Heart right ventricle (tissue), 16 donors: ENCODE measurements at regions of chr12 and their contacts with region 1.

Region 1: DNA sequence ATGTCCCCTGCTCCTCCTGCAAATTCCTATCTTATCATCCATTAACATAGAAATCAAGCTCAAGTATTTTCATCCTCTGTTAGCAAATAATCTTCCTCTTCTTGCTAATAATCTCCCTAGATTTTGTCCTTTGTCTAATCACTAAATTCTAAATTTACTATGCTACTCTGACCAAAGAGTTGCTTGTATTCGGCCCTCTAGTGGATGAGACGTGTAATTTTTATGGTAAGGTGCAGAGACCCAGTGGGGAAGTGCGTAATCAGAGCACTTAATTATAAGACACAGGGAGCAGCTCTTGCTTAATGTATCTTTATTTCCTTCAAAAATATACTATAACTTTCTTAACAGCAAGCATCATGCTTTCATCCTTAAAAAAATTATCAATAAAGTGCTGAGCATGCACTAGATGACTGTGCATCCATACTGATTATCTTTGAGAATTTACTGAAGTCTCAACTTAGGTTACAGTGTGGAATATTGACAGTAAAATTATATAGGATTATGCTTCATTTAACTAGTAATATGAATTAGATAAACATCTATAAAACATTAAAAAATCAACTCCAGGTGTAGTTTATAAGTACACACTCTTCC is 212.6 kb downstream of the SLC16A7 start:
- DNase-seq: no peak
- ATAC-seq: peak in 4 of 8 donors; percentile 52 to 78 (median 68)
- H3K4me3 ChIP-seq: no peak overlapping the region
- H3K27ac ChIP-seq: no peak overlapping the region
- H3K4me1 ChIP-seq: peaks cover 0 to 4% (median 0%) of the 10 kb centered on the region in 9 donors
- H3K27me3 ChIP-seq: no peaks in the 10 kb centered on the region
- CTCF ChIP-seq: peak; percentile 51 to 80 (median 69)

Region 2: DNA sequence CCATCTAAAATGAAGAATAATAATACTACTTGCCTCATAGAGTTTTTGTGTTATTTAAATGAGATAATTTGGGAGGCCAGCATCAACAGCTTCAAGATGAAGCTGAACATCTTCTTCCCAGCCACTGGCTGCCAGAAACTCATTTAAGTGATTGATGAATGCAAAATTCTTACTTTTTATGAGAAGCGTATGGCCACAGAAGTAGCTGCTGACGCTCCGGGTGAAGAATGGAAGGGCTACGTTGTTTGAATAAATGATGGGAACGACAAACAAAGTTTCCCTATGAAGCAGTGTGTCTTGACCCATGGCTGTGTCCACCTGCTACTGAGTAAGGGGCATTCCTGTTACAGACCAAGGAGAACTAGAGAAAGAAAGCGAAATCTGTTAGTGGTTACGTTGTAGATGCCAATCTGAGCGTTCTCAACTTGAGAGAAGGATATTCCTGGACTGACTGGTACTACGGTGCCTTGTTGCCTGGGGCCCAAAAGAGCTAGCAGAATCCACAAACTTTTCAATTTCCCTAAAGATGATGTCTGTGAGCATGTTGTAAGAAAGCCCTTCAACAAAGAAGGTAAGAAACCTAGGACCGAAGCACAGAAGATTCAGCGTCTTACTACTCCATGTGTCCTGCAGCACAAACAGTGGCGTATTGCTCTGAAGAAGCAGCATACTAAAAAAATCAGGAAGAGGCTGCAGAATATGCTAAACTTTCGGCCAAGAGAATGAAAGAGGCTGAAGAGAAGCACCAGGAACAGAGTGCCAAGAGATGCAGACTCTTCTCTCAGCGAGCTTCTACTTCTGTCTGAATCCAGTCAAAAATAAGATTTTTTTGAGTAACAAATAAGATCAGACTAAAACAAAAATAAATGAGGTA is 788.1 kb before region 1 on chr12:
- intact Hi-C with region 1: no loop called
- DNase-seq: no peak
- ATAC-seq: no peak
- H3K4me3 ChIP-seq: no peak overlapping the region
- H3K27ac ChIP-seq: no peak overlapping the region
- H3K4me1 ChIP-seq: no peaks in the 10 kb centered on the region
- H3K27me3 ChIP-seq: no peaks in the 10 kb centered on the region
- CTCF ChIP-seq: no peak

Region 3: DNA sequence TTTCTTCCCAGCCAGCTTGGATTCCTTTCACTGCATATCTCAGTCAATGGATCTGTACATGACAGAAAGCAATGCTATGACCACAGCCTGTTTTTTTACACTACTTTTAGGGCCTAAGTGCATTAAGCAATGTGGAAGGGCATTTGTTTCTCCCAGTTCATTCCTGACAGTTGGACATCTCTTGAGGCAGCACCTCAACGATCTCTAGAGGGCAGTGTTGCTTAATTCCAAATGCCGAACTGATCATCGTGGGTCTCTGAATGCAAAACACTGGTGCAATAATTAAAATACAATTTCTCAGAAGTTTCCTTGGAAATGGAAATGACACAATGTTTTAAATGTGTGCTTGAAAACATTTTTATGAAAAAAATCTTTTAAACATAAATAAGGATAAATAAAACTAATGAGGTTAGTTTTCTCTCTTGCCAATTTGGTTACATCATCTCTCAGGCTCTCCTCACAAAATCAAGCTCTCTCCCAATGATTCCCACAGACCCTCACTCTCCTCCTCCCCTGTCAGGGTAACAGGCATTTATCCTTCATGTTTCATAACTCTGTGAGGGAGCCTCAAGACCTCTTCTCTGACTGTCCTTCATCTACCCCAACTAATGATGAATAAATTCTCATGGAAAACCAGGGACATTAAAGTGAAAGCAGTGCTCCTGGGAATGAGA is 405.0 kb before region 1 on chr12:
- intact Hi-C with region 1: loop called in 3 of 10 experiments (anchors 10 kb)
- DNase-seq: peak in 1 of 2 donors; percentile 41
- ATAC-seq: peak in 7 of 8 donors; percentile 54 to 79 (median 74)
- H3K4me3 ChIP-seq: peak overlapping the region in 2 of 10 donors; percentile 11 to 22
- H3K27ac ChIP-seq: no peak overlapping the region
- H3K4me1 ChIP-seq: peaks cover 0 to 8% (median 0%) of the 10 kb centered on the region in 9 donors
- H3K27me3 ChIP-seq: no peaks in the 10 kb centered on the region
- CTCF ChIP-seq: peak; percentile 49 to 82 (median 77)

Region 4: GRCh38 chr12:59444932-59445331 is 363.5 kb before region 1 on chr12:
- intact Hi-C with region 1: loop called in 3 of 10 experiments (anchors 10 kb)
- DNase-seq: no peak
- ATAC-seq: no peak
- H3K4me3 ChIP-seq: no peak overlapping the region
- H3K27ac ChIP-seq: no peak overlapping the region
- H3K4me1 ChIP-seq: no peaks in the 10 kb centered on the region
- H3K27me3 ChIP-seq: no peaks in the 10 kb centered on the region
- CTCF ChIP-seq: peak in 8 of 9 donors; percentile 17 to 58 (median 46)

Region 5: GRCh38 chr12:59452259-59452658 is 356.2 kb before region 1 on chr12:
- intact Hi-C with region 1: loop called in 3 of 10 experiments (anchors 10 kb)
- DNase-seq: no peak
- ATAC-seq: peak in 2 of 8 donors; percentile 27 to 44
- H3K4me3 ChIP-seq: no peak overlapping the region
- H3K27ac ChIP-seq: no peak overlapping the region
- H3K4me1 ChIP-seq: peaks cover 0 to 12% (median 5%) of the 10 kb centered on the region in 9 donors
- H3K27me3 ChIP-seq: no peaks in the 10 kb centered on the region
- CTCF ChIP-seq: no peak

Region 6: DNA sequence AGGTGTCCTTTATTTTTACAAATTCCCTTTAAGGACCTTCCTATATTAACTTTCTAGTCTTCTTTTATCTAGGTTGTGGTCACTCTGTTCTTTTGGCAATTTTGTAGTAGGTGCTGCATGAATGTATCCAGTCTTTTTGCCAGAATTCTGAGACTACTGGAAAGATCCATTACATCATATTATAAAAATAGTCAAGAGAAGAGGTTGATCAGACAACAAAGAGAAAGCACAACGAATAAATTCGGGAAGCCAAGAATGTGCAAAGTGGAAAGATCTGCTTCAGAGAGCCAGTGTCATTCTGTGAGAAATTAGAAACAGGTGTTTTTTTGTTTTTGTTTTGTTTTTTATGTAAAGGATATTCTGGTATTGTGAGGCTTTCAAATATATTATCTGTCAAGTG is 228.4 kb before region 1 on chr12:
- intact Hi-C with region 1: loop called in 1 of 10 experiments (anchors 10 kb)
- DNase-seq: no peak
- ATAC-seq: peak in 5 of 8 donors; percentile 18 to 73 (median 52)
- H3K4me3 ChIP-seq: no peak overlapping the region
- H3K27ac ChIP-seq: peak overlapping the region in 5 of 10 donors; percentile 20 to 64 (median 46)
- H3K4me1 ChIP-seq: peaks cover 0 to 13% (median 0%) of the 10 kb centered on the region in 9 donors
- H3K27me3 ChIP-seq: no peaks in the 10 kb centered on the region
- CTCF ChIP-seq: no peak

Region 7: GRCh38 chr12:59595883-59596540 is 212.4 kb before region 1 on chr12 and contains the start of gene SLC16A7:
- intact Hi-C with region 1: loop called in 2 of 10 experiments (anchors 10 kb)
- DNase-seq: peak; percentile 89 to 91
- ATAC-seq: peak; percentile 87 to 95 (median 90)
- H3K4me3 ChIP-seq: peak within 1 kb of the TSS; percentile 62 to 86 (median 69)
- H3K27ac ChIP-seq: peak within 1 kb of the TSS; percentile 94 to 99 (median 96)
- H3K4me1 ChIP-seq: peaks cover 0 to 48% (median 30%) of the 10 kb centered on the region in 9 donors
- H3K27me3 ChIP-seq: no peaks in the 10 kb centered on the region
- CTCF ChIP-seq: no peak
- total RNA-seq, gene SLC16A7: 96.3 to 246 (median 184) TPM

Region 8: GRCh38 chr12:60494244-60494643 is 685.8 kb after region 1 on chr12:
- intact Hi-C with region 1: loop called in 1 of 10 experiments (anchors 5 kb)
- DNase-seq: no peak
- ATAC-seq: no peak
- H3K4me3 ChIP-seq: no peak overlapping the region
- H3K27ac ChIP-seq: no peak overlapping the region
- H3K4me1 ChIP-seq: peaks cover 0 to 4% (median 0%) of the 10 kb centered on the region in 9 donors
- H3K27me3 ChIP-seq: no peaks in the 10 kb centered on the region
- CTCF ChIP-seq: peak in 8 of 9 donors; percentile 6 to 54 (median 44)